Activated CD4-positive, alpha-beta T cell treated with anti-CD3 and anti-CD28 coated beads for 36 hours (primary cell): ENCODE measurements at regions of chr20 and their contacts with region 1.

Region 1: DNA sequence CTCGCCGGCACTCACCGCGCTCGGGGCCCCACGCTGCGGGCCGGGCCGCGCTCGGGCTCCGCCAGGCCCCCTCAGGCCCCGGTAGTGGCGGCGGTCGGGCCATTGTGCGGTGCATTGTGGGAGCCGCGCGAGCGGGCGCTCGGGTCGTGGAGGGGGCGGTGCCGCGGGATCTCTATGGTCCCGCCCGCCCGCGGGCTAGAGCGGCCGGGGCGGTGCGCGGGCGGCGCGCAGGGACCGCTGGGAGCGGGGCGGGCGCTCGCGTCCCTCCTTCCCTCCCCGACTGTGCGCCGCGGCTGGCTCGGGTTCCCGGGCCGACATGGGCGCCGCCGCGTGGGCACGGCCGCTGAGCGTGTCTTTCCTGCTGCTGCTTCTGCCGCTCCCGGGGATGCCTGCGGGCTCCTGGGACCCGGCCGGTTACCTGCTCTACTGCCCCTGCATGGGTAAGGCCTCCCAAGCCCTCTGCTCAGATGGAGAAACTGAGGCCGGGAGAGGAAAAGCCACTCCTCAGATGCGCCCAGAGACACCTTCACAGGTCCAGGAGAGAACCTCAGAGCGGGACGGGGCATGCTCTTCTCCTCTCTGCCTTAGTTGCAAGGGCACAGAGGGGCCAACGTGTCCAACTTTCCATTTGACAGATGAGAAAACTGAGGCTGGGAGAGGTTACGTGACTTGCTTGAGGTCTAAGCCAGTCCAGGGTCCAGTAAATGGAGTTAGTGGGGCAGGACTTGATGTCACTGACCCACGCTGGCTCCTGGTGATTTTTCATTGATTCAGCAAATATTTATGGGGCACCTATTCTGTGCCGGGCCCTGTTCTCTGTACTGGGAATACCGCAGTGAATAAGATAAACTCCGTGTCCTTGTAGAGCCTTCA is at the starts of genes PLAGL2 and POFUT1:
- DNase-seq: peak; percentile 95
- ATAC-seq: peak; percentile 68
- H3K4me3 Mint-ChIP-seq: peak within 1 kb of the TSS; percentile 99
- H3K27ac Mint-ChIP-seq: peak within 1 kb of the TSS; percentile 99
- H3K4me1 Mint-ChIP-seq: peaks cover 63% of the 10 kb centered on the region
- H3K27me3 Mint-ChIP-seq: no peaks in the 10 kb centered on the region
- total RNA-seq, gene PLAGL2: 89.1 to 98.2 TPM
- total RNA-seq, gene POFUT1: 51.8 to 54.3 TPM

Region 2: DNA sequence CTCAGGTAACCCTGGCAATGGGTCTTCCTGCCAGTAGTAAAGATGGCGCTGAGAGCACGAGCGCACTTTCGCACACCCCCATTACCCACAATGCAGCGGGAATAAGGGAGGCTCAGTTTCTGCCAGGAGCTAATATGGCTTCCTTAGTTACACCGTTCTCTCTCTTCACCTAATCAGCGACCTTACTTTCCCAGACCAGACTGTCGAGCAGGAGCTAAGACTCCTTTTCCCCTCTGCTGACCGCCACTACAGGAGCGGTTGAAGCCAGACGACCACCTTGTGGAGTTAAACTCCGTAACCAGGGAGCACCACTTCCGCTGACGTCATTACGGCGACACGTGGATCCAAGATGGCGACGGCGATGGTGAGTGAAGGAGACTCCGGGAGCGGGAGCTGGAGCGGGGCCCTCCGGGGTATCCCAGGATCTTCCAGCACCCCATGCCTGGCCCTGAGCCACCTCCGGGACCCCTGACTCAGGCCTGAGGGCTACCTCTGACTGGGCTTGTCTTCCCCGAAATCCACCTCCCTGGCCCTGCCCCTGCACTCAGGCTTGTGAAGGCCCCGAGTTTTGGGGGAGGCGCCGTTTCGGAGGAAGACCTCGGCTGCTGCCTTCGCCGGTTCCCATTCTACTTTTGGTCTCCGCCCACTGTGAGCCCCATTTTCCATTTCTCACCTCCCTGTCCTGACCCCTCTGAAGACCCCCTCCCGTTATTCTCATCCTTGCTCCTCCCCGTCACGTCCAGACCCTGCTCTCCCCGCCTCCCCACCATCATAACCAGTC is 98.3 kb before region 1 on chr20 and contains the start of gene TM9SF4:
- CTCF ChIA-PET with region 1: no interaction called
- POLR2A ChIA-PET with region 1: interaction called, 4 read pairs
- intact Hi-C with region 1: loop called (anchors 1 to 5 kb)
- DNase-seq: peak; percentile 93
- ATAC-seq: peak; percentile 88
- H3K4me3 Mint-ChIP-seq: peak within 1 kb of the TSS; percentile 97
- H3K27ac Mint-ChIP-seq: peak within 1 kb of the TSS; percentile 99
- H3K4me1 Mint-ChIP-seq: peaks cover 34% of the 10 kb centered on the region
- H3K27me3 Mint-ChIP-seq: no peaks in the 10 kb centered on the region
- total RNA-seq, gene TM9SF4: 43.2 to 66.5 TPM

Region 3: DNA sequence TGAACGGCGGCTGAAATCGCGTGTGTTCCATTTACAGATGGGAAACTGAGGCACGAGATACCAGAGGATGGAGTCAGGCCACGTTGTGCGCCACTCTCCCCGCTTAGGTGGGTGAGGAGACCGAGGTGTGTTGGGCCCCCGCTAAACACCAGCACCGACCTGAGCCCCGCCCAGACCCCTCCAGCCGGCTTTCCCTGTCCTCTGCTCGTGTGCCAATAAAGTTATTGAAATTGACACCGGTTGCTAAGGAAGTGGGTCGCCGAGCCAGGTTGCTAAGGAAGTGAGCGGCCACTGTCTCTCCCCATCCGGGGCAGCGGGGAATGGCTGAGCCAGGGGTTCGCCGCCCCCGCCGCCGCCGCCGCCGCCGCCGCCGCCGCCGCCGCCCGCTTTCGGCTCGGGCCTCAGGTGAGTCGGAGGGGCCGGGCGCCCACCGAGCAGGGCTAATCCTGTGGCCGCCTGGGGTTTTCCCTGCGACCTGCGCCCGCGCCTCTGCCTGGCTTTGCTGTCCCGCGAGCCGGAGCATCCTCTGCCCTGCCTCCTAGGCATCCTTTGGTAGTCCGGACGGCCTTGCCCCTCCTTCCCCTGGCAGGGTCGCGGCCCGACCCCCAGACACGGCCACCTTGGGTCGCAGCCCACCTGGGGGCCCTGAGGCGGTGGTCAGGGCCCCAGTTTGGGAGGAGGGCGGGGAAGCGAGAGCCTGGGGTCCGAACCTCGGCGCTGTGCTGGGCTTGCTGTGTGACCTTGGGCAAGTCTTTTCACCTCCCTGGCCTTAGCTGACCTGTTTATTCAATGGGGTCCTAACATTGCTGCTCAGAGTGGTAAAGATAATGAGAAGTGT is 69.7 kb after region 1 on chr20 and contains the start of gene KIF3B:
- CTCF ChIA-PET with region 1: no interaction called
- POLR2A ChIA-PET with region 1: interaction called, 5 read pairs
- intact Hi-C with region 1: loop called (anchors 1 to 2 kb)
- DNase-seq: peak; percentile 93
- ATAC-seq: peak; percentile 81
- H3K4me3 Mint-ChIP-seq: peak within 1 kb of the TSS; percentile 91
- H3K27ac Mint-ChIP-seq: peak within 1 kb of the TSS; percentile 98
- H3K4me1 Mint-ChIP-seq: peaks cover 58% of the 10 kb centered on the region
- H3K27me3 Mint-ChIP-seq: no peaks in the 10 kb centered on the region
- total RNA-seq, gene KIF3B: 39.9 to 40.7 TPM

Region 4: DNA sequence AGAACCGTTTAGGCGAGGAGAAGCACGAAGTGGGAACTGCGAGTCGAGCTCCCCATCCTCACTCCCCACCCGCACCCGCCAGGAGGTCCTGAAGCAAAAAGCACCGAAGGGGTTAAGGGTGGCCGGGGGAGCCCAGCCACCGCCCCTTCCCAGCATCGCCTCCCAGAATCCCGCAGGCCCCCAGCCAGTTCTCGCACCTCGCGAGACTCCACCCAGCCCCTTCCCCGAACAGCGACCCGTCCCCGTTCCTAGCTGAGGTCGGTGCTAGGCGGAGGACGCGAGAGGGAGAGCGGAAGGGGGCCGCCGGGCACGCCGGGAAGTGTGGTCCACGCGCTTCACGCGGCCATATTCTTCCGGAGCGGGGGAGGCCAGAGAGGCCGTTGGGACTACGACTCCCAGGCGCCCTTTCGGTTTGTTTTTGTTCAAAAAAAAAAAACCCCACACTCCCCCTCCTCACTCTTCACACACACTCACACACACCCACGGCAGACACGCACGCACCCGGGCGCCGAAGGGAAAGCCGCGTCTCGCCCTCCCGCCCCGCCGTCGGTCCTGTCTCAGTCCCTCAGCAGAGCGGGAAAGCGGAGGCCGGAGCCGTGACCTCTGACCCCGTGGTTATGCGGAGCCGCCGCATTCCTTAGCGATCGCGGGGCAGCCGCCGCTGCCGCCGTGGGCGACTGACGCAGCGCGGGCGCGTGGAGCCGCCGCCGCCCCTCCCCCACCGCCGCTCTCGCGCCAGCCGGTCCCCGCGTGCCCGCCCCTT is 150.2 kb after region 1 on chr20 and contains the start of gene ASXL1:
- CTCF ChIA-PET with region 1: interaction called, 6 read pairs
- POLR2A ChIA-PET with region 1: interaction called, 19 read pairs
- intact Hi-C with region 1: loop called (anchors 1 kb)
- DNase-seq: peak; percentile 98
- ATAC-seq: peak; percentile 82
- H3K4me3 Mint-ChIP-seq: peak within 1 kb of the TSS; percentile 99
- H3K27ac Mint-ChIP-seq: peak within 1 kb of the TSS; percentile 100
- H3K4me1 Mint-ChIP-seq: peaks cover 68% of the 10 kb centered on the region
- H3K27me3 Mint-ChIP-seq: no peaks in the 10 kb centered on the region
- total RNA-seq, gene ASXL1: 129 to 141 TPM

Region 5: DNA sequence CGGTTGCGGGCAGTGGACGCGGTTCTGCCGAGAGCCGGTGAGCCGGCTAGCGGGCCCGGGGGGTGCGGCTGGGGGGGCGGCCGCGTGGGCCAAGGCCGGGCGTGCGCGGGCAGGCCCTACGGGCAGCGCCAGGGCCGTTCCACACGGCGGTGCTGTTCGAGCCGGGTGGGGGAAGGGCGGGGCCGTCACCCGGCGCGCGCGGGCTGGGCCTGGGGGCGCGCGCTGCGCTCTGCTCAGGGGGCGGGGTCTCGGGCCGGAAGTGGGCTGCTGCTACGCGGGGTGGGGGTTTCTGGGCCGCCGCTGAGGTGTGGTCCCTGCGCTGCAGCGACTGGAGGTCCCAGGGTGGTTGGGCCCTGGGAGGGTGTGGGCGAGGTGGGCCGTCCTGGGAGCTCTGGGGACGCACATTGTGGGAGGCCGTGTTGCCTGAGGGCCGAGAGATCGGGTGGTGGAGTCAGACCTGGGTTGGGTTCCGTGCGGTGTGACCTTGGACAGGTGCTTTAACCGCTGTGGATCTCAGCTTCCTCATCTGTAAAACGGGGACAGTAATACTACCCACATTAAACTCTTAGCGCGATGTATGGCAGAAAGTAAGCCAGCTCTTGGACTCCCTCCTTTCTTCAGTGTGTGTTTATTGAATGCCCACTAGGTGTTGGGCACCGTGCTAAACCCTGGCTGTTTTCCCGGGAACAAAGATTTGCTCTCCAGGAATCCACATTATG is 612.3 kb after region 1 on chr20:
- CTCF ChIA-PET with region 1: no interaction called
- POLR2A ChIA-PET with region 1: no interaction called
- intact Hi-C with region 1: loop called in 1 of 2 experiments (anchors 1 kb)
- DNase-seq: peak; percentile 85
- ATAC-seq: peak; percentile 76
- H3K4me3 Mint-ChIP-seq: peak overlapping the region; percentile 87
- H3K27ac Mint-ChIP-seq: peak overlapping the region; percentile 92
- H3K4me1 Mint-ChIP-seq: peaks cover 37% of the 10 kb centered on the region
- H3K27me3 Mint-ChIP-seq: no peaks in the 10 kb centered on the region